PC-9 (cell line): ENCODE measurements at regions of chr16 and their contacts with region 1.

Region 1: GRCh38 chr16:26701243-26701886 is 365.4 kb upstream of the C16orf82 start:
- DNase-seq: no peak
- H3K4me3 ChIP-seq: no peak overlapping the region
- H3K27ac ChIP-seq: no peak overlapping the region
- H3K4me1 ChIP-seq: no peaks in the 10 kb centered on the region
- H3K27me3 ChIP-seq: no peaks in the 10 kb centered on the region
- CTCF ChIP-seq: no peak

Region 2: DNA sequence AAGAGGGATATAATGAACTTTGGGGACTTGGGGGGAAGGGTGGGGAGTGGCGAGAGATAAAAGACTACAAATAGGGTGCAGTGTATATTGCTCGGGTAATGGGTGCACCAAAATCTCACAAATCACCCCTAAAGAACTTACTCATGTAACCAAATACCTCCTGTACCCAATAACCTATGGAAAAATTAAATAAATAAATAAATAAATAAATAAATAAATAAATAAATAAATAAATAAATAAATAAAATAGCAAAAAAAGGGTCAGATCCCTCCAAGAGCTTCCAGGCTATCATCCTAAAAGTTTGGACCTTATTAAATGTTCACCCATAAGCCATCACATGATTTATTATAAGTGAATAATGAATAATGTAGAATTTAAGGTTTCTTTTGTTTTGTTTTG is 270.7 kb before region 1 on chr16:
- CTCF ChIA-PET with region 1: no interaction called
- POLR2A ChIA-PET with region 1: interaction called, 17 read pairs
- intact Hi-C with region 1: no loop called
- DNase-seq: no peak
- H3K4me3 ChIP-seq: no peak overlapping the region
- H3K27ac ChIP-seq: no peak overlapping the region
- H3K4me1 ChIP-seq: no peaks in the 10 kb centered on the region
- H3K27me3 ChIP-seq: no peaks in the 10 kb centered on the region
- CTCF ChIP-seq: no peak

Region 3: GRCh38 chr16:27005386-27005785 is 304.0 kb after region 1 on chr16:
- CTCF ChIA-PET with region 1: no interaction called
- POLR2A ChIA-PET with region 1: no interaction called
- intact Hi-C with region 1: no loop called
- DNase-seq: no peak
- H3K4me3 ChIP-seq: no peak overlapping the region
- H3K27ac ChIP-seq: no peak overlapping the region
- H3K4me1 ChIP-seq: no peaks in the 10 kb centered on the region
- H3K27me3 ChIP-seq: peaks cover 15% of the 10 kb centered on the region; the same call in 1 of the 2 replicates
- CTCF ChIP-seq: no peak